CD4-positive, alpha-beta T cell (primary cell): ENCODE measurements at regions of chr3 and their contacts with region 1.

Region 1: DNA sequence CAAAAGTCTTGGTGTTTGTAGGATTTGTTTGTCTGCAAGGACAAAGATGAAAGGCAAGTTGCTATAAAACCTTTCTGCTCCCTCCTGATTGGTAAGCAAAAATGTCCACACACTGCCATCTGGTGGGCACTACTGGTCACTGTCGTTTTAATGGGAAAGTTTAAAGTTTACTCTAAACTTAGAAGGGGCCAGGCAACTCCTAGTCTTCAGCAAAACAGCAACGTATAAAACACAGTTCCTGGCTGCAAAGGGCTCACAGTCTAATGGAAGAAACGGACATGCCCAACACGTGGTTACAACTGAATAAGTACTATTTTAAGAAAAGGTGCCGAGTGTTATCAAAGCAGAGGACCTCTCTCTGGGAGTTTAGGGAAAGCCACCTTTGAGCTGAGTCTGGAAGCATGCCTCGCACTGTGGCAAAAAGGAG is 23.7 kb upstream of the TPRG1 start:
- DNase-seq: peak; percentile 53 to 82 (median 63)
- ATAC-seq: peak; percentile 75
- H3K4me3 ChIP-seq: no peak overlapping the region
- H3K4me3 Mint-ChIP-seq: no peak overlapping the region
- H3K27ac ChIP-seq: no peak overlapping the region
- H3K27ac Mint-ChIP-seq: no peak overlapping the region
- H3K4me1 ChIP-seq: peaks cover 8% of the 10 kb centered on the region
- H3K4me1 Mint-ChIP-seq: peaks cover 10% of the 10 kb centered on the region
- H3K27me3 ChIP-seq: no peaks in the 10 kb centered on the region
- H3K27me3 Mint-ChIP-seq: no peaks in the 10 kb centered on the region
- CTCF ChIP-seq: peak; percentile 79

Region 2: GRCh38 chr3:187319699-187320302 is 1828.3 kb before region 1 on chr3:
- CTCF ChIA-PET with region 1: no interaction called
- POLR2A ChIA-PET with region 1: no interaction called
- intact Hi-C with region 1: loop called (anchors 5 to 10 kb)
- DNase-seq: peak; percentile 16 to 71 (median 38)
- ATAC-seq: peak; percentile 77
- H3K4me3 ChIP-seq: no peak overlapping the region
- H3K4me3 Mint-ChIP-seq: no peak overlapping the region
- H3K27ac ChIP-seq: no peak overlapping the region
- H3K27ac Mint-ChIP-seq: no peak overlapping the region
- H3K4me1 ChIP-seq: peaks cover 14% of the 10 kb centered on the region
- H3K4me1 Mint-ChIP-seq: peaks cover 15% of the 10 kb centered on the region
- H3K27me3 ChIP-seq: peaks cover 13 to 15% of the 10 kb centered on the region in 2 experiments
- H3K27me3 Mint-ChIP-seq: peaks cover 63% of the 10 kb centered on the region
- CTCF ChIP-seq: no peak

Region 3: DNA sequence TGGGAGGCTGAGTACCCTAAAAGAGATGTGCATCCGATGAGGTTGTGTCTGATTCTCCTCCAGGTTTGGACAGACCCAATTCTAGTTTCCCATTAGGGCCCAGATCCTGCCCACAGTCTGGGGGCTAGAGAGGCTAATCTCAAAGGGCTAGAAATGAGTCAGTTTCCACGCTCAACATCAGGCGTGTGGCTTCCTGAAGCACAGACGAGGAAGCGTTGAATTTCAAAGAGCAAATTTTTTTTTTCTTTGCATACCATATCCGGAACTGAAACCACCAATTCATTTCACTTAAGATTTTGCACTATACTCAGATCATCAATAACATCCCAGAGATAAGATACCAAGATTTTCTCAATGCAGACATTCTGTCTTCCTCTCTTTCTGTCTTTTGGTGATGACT is 1229.0 kb before region 1 on chr3:
- CTCF ChIA-PET with region 1: no interaction called
- POLR2A ChIA-PET with region 1: no interaction called
- intact Hi-C with region 1: loop called in 1 of 2 experiments (anchors 10 kb)
- DNase-seq: peak; percentile 20 to 84 (median 45)
- ATAC-seq: peak; percentile 87
- H3K4me3 ChIP-seq: peak overlapping the region; percentile 30
- H3K4me3 Mint-ChIP-seq: peak overlapping the region; percentile 82
- H3K27ac ChIP-seq: peak overlapping the region; percentile 8 to 53
- H3K27ac Mint-ChIP-seq: peak overlapping the region; percentile 85
- H3K4me1 ChIP-seq: peaks cover 22% of the 10 kb centered on the region
- H3K4me1 Mint-ChIP-seq: peaks cover 56% of the 10 kb centered on the region
- H3K27me3 ChIP-seq: no peaks in the 10 kb centered on the region
- H3K27me3 Mint-ChIP-seq: no peaks in the 10 kb centered on the region
- CTCF ChIP-seq: no peak

Region 4: DNA sequence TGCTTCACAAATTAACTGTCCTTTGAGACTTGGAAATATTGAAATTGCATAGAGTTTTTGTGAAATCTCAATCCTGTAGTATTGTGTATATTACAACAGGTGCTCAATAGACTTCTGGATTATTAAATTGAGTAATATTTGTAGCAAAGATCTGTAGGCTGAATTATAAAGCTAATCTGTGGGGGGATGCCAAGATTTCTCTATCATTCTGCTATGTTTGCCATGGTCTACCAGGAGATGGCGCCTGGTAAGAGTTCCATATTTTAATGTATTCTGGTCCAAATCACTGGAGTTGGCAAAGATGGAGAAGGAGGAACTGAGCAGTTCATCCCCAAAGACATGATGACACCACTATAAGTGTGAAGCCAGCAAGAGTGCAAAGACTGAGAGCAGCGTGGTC is 317.2 kb before region 1 on chr3:
- CTCF ChIA-PET with region 1: no interaction called
- POLR2A ChIA-PET with region 1: no interaction called
- intact Hi-C with region 1: loop called in 1 of 2 experiments (anchors 5 kb)
- DNase-seq: peak in 3 of 14 experiments; percentile 4 to 28 (median 21)
- ATAC-seq: no peak
- H3K4me3 ChIP-seq: no peak overlapping the region
- H3K4me3 Mint-ChIP-seq: no peak overlapping the region
- H3K27ac ChIP-seq: no peak overlapping the region
- H3K27ac Mint-ChIP-seq: no peak overlapping the region
- H3K4me1 ChIP-seq: peaks cover 9% of the 10 kb centered on the region
- H3K4me1 Mint-ChIP-seq: peaks cover 20% of the 10 kb centered on the region
- H3K27me3 ChIP-seq: no peaks in the 10 kb centered on the region
- H3K27me3 Mint-ChIP-seq: no peaks in the 10 kb centered on the region
- CTCF ChIP-seq: peak; percentile 22

Region 5: DNA sequence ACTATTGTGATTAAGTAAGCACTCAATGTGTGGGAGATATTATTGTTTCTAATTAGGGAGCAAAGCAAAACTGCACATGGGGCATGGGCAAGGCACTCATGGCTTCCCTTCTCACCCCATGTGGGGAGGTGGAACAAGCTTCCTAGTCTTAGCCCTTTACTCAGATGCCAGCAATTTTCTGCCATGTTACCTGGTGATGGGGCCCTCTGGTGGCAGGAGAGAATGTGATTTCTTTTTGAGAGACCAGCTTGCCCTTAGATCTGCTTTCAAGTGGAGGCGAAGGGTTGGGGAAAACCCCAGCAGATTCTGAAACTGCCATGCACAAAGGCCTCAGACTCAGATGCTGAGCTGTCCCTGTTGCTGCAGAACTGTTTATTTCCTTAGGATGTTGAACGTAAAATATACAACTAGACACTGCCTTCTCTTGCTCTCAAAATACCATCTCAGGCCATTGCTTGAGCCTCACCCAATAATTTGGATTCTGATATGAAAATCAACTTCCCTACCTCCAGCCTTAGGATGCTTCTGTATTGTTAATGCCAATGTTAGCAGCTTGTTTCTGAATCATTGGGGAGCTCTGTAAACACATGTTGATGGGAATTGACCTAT is 106.5 kb before region 1 on chr3:
- CTCF ChIA-PET with region 1: interaction called, 20 read pairs
- POLR2A ChIA-PET with region 1: interaction called, 7 read pairs
- intact Hi-C with region 1: loop called (anchors 1 to 2 kb)
- DNase-seq: peak; percentile 51 to 89 (median 63)
- ATAC-seq: peak; percentile 98
- H3K4me3 ChIP-seq: no peak overlapping the region
- H3K4me3 Mint-ChIP-seq: no peak overlapping the region
- H3K27ac ChIP-seq: peak overlapping the region in 1 of 2 donors; percentile 6
- H3K27ac Mint-ChIP-seq: peak overlapping the region; percentile 5
- H3K4me1 ChIP-seq: peaks cover 6% of the 10 kb centered on the region
- H3K4me1 Mint-ChIP-seq: peaks cover 8% of the 10 kb centered on the region
- H3K27me3 ChIP-seq: no peaks in the 10 kb centered on the region
- H3K27me3 Mint-ChIP-seq: no peaks in the 10 kb centered on the region
- CTCF ChIP-seq: peak; percentile 54

Region 6: DNA sequence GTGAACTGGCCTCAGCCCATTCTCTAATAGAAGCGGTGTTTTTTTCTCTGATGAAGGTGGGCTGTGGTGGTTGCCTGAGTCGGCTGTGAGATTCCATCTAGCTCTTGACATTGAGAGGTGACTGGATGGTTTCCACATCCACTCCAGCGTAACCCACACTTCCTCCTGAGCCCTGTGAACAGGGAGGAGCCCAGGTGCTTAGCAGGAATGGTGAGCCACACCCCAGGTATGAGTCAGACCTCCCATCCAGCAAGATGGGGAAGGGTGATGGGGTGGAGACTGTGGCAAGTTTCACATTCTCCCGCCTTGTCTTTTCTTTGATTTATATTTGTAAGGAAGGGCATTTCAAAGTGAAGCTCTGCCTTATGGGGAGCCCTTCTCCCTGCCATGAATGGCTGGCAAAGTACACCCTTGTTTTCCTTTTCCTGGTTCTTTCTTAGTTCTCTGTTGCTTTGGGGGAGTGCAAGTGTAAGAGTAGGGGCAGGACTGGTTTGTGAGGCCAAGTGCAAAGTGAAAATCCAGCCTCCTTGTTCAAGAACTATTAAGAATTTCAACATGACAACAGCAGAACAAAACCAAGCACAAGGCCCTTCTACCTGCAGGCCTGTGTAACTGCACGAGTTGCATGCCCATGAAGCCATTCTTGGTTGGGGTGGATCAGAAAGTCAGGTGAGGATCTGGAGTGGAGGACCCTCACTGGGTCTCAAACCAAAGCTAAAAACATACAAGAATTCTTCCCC is 19.1 kb after region 1 on chr3:
- CTCF ChIA-PET with region 1: no interaction called
- POLR2A ChIA-PET with region 1: no interaction called
- intact Hi-C with region 1: no loop called
- DNase-seq: no peak
- ATAC-seq: no peak
- H3K4me3 ChIP-seq: no peak overlapping the region
- H3K4me3 Mint-ChIP-seq: no peak overlapping the region
- H3K27ac ChIP-seq: no peak overlapping the region
- H3K27ac Mint-ChIP-seq: no peak overlapping the region
- H3K4me1 ChIP-seq: peaks cover 5% of the 10 kb centered on the region
- H3K4me1 Mint-ChIP-seq: peaks cover 12% of the 10 kb centered on the region
- H3K27me3 ChIP-seq: no peaks in the 10 kb centered on the region
- H3K27me3 Mint-ChIP-seq: no peaks in the 10 kb centered on the region
- CTCF ChIP-seq: no peak

Region 7: DNA sequence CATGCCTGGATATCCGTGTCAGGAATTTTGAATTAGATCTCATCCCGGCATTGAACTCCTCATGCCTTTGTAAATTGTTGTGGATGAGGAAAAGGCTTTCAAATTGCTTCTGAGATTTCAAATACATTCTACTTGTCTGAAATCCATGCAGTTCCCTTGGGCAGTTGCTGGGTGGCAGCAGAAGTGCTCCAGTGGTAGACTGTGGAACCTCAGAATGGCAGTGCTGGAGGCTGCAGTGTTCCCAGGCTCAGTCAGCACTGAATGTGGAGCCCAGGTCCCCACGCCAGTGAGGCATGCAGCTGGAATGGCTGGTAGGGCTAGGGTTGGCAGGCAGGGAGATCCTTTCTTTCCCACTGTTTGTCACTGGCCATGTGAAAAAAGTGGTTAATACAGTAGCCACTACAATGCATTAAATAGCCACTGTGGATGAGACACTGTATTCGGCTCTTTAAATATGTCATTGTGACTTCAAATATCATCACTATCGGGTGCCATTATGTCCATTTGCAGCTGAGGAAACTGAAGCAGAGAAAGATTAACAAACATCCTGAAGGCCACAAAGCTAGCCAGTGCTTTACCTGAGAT is 122.2 kb after region 1 on chr3:
- CTCF ChIA-PET with region 1: no interaction called
- POLR2A ChIA-PET with region 1: no interaction called
- intact Hi-C with region 1: no loop called
- DNase-seq: peak in 13 of 14 experiments; percentile 4 to 64 (median 17)
- ATAC-seq: peak; percentile 49
- H3K4me3 ChIP-seq: no peak overlapping the region
- H3K4me3 Mint-ChIP-seq: no peak overlapping the region
- H3K27ac ChIP-seq: no peak overlapping the region
- H3K27ac Mint-ChIP-seq: no peak overlapping the region
- H3K4me1 ChIP-seq: peaks cover 6% of the 10 kb centered on the region
- H3K4me1 Mint-ChIP-seq: peaks cover 19% of the 10 kb centered on the region
- H3K27me3 ChIP-seq: no peaks in the 10 kb centered on the region
- H3K27me3 Mint-ChIP-seq: no peaks in the 10 kb centered on the region
- CTCF ChIP-seq: peak; percentile 58